PC-9 (cell line): ENCODE measurements at regions of chr2 and their contacts with region 1.

Region 1: GRCh38 chr2:174039551-174040416 is 74.6 kb upstream of the SP3 start:
- DNase-seq: peak; percentile 90 to 94
- H3K4me3 ChIP-seq: no peak overlapping the region
- H3K27ac ChIP-seq: peak overlapping the region; percentile 43
- H3K4me1 ChIP-seq: peaks cover 5% of the 10 kb centered on the region
- H3K27me3 ChIP-seq: no peaks in the 10 kb centered on the region
- CTCF ChIP-seq: peak; percentile 98

Region 2: GRCh38 chr2:173749315-173749714 is 290.5 kb before region 1 on chr2:
- CTCF ChIA-PET with region 1: no interaction called
- POLR2A ChIA-PET with region 1: no interaction called
- intact Hi-C with region 1: loop called (anchors 10 kb)
- DNase-seq: no peak
- H3K4me3 ChIP-seq: no peak overlapping the region
- H3K27ac ChIP-seq: no peak overlapping the region
- H3K4me1 ChIP-seq: no peaks in the 10 kb centered on the region
- H3K27me3 ChIP-seq: peaks cover 29% of the 10 kb centered on the region; the same call in 1 of the 2 replicates
- CTCF ChIP-seq: peak; percentile 65

Region 3: DNA sequence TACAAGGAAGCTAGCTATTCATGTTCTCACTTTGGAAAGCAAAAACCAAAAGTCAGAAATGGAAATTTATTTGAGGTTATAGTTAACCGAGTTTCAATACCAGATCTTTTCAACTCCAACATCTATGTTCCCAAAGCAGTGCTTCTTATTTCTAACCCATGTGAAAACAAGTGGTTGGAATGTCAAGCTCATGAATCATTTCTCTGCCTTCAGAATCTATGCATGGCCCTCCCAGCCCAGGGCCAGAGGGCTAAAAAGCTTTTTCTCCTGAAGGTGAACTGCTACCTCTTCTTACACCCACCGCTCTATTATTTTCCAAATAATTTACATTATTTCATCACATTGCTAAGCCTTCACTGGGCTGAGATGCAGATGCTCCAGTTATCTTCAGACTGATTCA is 233.0 kb before region 1 on chr2:
- CTCF ChIA-PET with region 1: no interaction called
- POLR2A ChIA-PET with region 1: no interaction called
- intact Hi-C with region 1: no loop called
- DNase-seq: no peak
- H3K4me3 ChIP-seq: no peak overlapping the region
- H3K27ac ChIP-seq: no peak overlapping the region
- H3K4me1 ChIP-seq: no peaks in the 10 kb centered on the region
- H3K27me3 ChIP-seq: peaks cover 17% of the 10 kb centered on the region
- CTCF ChIP-seq: no peak

Region 4: GRCh38 chr2:173903601-173904394 is 136.0 kb before region 1 on chr2:
- CTCF ChIA-PET with region 1: no interaction called
- POLR2A ChIA-PET with region 1: no interaction called
- intact Hi-C with region 1: loop called (anchors 10 kb)
- DNase-seq: no peak
- H3K4me3 ChIP-seq: no peak overlapping the region
- H3K27ac ChIP-seq: no peak overlapping the region
- H3K4me1 ChIP-seq: no peaks in the 10 kb centered on the region
- H3K27me3 ChIP-seq: no peaks in the 10 kb centered on the region
- CTCF ChIP-seq: no peak

Region 5: GRCh38 chr2:173972603-173973002 is 67.2 kb before region 1 on chr2:
- CTCF ChIA-PET with region 1: interaction called, 4 read pairs
- POLR2A ChIA-PET with region 1: no interaction called
- intact Hi-C with region 1: loop called (anchors 2 kb)
- DNase-seq: peak; percentile 95 to 96
- H3K4me3 ChIP-seq: no peak overlapping the region
- H3K27ac ChIP-seq: peak overlapping the region; percentile 21
- H3K4me1 ChIP-seq: peaks cover 32% of the 10 kb centered on the region
- H3K27me3 ChIP-seq: no peaks in the 10 kb centered on the region
- CTCF ChIP-seq: no peak